ENCODE measurements at regions of chr22 and their contacts with region 1.

Region 1: DNA sequence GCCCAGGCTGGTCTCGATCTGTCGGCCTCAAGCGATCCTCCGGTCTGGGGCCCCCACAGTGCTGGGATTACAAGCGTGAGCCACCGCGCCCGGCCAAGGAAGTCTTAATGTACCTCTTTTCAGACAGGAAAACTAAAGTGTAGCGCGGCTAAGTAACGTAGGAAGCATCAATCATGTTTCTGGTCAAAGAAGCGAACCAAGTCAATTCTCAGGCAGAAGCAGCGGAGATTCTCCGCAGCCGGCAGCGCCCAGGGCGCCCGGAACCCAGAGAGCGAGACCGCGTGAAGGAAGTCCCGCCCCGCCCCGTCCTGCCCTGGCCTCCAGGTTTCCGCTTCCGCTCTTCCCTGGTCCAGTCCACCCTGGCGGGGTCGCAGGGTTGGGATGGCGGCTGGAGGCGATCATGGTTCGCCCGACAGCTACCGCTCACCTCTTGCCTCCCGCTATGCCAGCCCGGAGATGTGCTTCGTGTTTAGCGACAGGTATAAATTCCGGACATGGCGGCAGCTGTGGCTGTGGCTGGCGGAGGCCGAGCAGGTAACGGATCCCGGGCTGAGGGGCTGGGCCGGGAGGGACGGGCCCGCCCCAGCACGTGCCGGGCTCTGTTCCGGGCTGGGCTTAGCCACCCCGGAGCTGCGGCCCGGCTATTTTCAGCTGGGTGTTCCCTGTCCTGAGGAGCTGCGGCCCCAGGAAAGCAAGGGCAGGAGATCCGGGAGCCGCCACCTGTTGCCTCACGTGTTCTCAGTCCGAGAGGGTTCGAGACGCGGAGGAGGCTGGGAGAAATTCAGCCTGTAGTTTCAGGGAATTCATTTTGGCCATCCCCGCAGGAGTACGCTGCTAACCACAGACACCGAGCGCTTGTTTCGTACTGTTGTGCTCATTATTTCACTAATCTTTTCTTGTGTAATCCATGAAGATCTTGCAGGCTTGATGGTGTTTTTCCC is at the start of gene ADSL:
- DNase-seq: peak; percentile 41
- ATAC-seq: peak; percentile 95
- H3K4me3 ChIP-seq: peak within 1 kb of the TSS; percentile 81
- H3K27ac ChIP-seq: peak within 1 kb of the TSS; percentile 92
- H3K4me1 ChIP-seq: 0 out of 2 replicates have a peak, but pooled peaks cover 3% of the 10 kb centered on the region
- H3K27me3 ChIP-seq: no peaks in the 10 kb centered on the region
- CTCF ChIP-seq: no peak
- EP300 ChIP-seq: no peak
- POLR2A ChIP-seq: peak; percentile 99
- RAD21 ChIP-seq: no peak
- polyA plus RNA-seq, gene ADSL: 230 to 313 TPM

Region 2: DNA sequence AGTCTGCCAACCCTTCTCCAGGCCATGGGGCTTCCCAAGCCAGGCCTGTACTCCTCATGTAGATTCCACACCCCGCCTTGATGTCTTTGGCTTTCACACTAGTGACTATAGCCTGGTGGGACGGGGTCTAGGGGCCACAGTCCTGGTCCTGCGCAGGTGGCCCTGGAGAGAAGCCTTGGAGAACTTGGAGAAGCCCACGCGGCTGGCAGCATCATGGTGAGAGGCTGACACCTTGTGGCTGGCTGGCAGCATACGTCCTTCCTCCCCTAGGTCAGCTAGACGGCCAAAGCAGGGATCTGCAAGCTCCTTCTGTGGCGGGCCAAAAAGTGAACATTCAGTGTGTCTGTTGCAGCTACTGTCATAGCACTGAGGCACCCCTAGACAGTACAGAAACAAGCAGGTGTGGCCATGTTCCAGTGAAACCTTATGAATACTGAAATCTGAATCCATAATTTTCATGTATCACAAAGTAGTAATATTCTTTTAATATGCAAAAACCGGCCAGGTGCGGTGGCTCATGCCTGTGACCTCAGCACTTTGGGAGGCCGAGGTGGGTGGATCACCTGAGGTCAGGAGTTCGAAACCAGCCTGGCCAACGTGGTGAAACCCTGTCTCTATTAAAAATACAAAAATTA is 309.7 kb before region 1 on chr22:
- CTCF ChIA-PET with region 1: interaction called, 68 read pairs
- POLR2A ChIA-PET with region 1: interaction called, 4 read pairs
- RAD21 ChIA-PET with region 1: interaction called, 16 read pairs
- SMC1A ChIA-PET with region 1: interaction called, 67 read pairs
- in situ Hi-C with region 1: no loop called
- intact Hi-C with region 1: no loop called
- DNase-seq: no peak
- ATAC-seq: peak; percentile 97
- H3K4me3 ChIP-seq: no peak overlapping the region
- H3K27ac ChIP-seq: no peak overlapping the region
- H3K4me1 ChIP-seq: no peaks in the 10 kb centered on the region
- H3K27me3 ChIP-seq: peaks cover 6 to 8% of the 10 kb centered on the region in 2 experiments
- CTCF ChIP-seq: peak; percentile 77 to 91 (median 88)
- EP300 ChIP-seq: no peak
- POLR2A ChIP-seq: no peak
- RAD21 ChIP-seq: peak; percentile 86

Region 3: GRCh38 chr22:40177738-40178416 is 168.6 kb before region 1 on chr22 and contains the start of gene TNRC6B:
- CTCF ChIA-PET with region 1: interaction called, 26 read pairs
- POLR2A ChIA-PET with region 1: interaction called, 3 read pairs
- RAD21 ChIA-PET with region 1: interaction called, 9 read pairs
- SMC1A ChIA-PET with region 1: interaction called, 6 read pairs
- in situ Hi-C with region 1: no loop called
- intact Hi-C with region 1: loop called (anchors 10 kb)
- DNase-seq: peak; percentile 98
- ATAC-seq: peak; percentile 92
- H3K4me3 ChIP-seq: peak within 1 kb of the TSS; percentile 60
- H3K27ac ChIP-seq: peak within 1 kb of the TSS; percentile 81
- H3K4me1 ChIP-seq: peaks cover 9% of the 10 kb centered on the region
- H3K27me3 ChIP-seq: no peaks in the 10 kb centered on the region
- CTCF ChIP-seq: no peak
- EP300 ChIP-seq: peak; percentile 17 to 80; a peak in 2 of 4 replicates
- POLR2A ChIP-seq: peak; percentile 91
- RAD21 ChIP-seq: peak; percentile 24; the same call in 1 of the 2 replicates
- polyA plus RNA-seq, gene TNRC6B: 3.6 to 25.3 TPM

Region 4: DNA sequence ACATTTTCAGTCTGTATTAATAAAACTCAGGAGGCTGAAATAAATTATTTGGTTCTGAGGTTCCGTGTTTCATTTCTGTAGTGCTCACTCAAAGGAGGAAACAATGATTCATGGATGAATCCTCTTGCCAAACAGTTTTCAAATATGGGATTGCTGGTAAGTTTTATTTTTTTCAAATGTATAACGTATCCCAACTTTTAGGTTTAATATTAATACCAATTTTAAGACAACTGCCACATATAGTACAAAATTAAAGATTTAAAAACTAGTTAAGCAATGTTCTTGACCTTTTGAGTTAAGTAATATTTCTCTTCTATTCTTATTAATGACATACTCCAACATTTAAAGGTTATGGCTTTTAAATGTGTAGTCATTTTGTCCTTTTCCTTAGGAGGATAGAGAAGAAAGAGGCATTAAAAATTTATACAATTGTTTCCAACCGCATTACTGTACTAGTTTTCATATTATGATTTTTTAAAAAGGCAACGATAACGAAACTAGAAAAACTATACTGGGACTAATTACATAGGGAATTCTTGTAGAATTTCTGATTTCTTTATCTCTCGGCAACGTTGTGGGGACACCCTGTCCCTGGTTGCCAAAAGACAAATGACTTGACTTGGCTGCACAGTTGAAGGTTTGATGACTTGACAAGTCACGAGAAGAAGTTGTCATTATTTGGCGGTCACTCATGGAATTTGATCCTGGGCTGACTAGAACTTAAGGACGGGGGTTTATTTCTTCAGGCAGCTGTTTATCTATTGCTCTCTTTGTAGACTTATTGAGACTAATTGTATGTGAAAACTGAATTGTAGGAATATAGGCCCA is 69.2 kb before region 1 on chr22:
- CTCF ChIA-PET with region 1: interaction called, 5 read pairs
- POLR2A ChIA-PET with region 1: interaction called, 3 read pairs
- RAD21 ChIA-PET with region 1: interaction called, 16 read pairs
- SMC1A ChIA-PET with region 1: interaction called, 19 read pairs
- in situ Hi-C with region 1: no loop called
- intact Hi-C with region 1: no loop called
- DNase-seq: no peak
- ATAC-seq: no peak
- H3K4me3 ChIP-seq: no peak overlapping the region; the same call in 1 of the 2 replicates
- H3K27ac ChIP-seq: peak overlapping the region; percentile 64
- H3K4me1 ChIP-seq: peaks cover 8% of the 10 kb centered on the region
- H3K27me3 ChIP-seq: no peaks in the 10 kb centered on the region
- CTCF ChIP-seq: no peak
- EP300 ChIP-seq: no peak
- POLR2A ChIP-seq: no peak
- RAD21 ChIP-seq: no peak

Region 5: DNA sequence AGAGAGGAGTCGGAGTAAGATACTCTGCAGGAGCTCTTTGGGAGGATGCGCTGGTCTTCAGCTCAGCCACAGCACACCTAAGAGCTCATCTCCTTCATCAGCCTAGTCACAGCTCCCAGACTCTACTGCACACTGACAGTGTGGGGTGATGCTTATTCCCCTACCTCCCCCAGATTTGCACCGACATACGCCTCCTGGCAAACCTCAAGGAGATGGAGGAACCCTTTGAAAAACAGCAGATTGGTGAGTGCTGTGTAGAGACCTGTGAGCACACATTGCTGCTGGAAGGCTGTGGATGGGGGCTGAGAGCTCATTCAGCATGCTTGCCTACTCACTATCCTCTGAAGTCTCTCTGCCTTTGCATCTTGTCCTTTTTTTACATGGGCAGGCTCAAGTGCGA is 14.7 kb after region 1 on chr22:
- CTCF ChIA-PET with region 1: interaction called, 12 read pairs
- POLR2A ChIA-PET with region 1: no interaction called
- RAD21 ChIA-PET with region 1: interaction called, 3 read pairs
- SMC1A ChIA-PET with region 1: interaction called, 7 read pairs
- in situ Hi-C with region 1: no loop called
- intact Hi-C with region 1: no loop called
- DNase-seq: no peak
- ATAC-seq: no peak
- H3K4me3 ChIP-seq: no peak overlapping the region
- H3K27ac ChIP-seq: no peak overlapping the region
- H3K4me1 ChIP-seq: no peaks in the 10 kb centered on the region
- H3K27me3 ChIP-seq: no peaks in the 10 kb centered on the region
- CTCF ChIP-seq: no peak
- EP300 ChIP-seq: no peak
- POLR2A ChIP-seq: no peak
- RAD21 ChIP-seq: no peak

Region 6: DNA sequence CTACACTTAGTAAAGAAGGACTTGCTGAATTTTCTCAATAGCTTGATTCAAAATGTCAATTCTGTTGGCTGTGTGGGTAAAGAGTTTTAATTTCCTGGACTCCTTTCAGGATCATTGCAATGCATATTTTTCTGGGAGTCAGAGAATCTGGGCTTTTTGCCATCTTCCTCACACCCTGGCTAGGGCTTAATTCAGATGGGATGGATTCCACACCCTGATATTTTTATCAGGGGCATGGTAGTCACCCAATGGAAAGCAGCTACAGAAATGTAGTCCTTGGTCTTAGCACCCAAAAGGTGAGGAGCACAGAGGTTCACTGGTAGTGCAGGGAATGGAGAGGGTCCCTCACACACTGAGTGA is 103.2 kb after region 1 on chr22:
- CTCF ChIA-PET with region 1: no interaction called
- POLR2A ChIA-PET with region 1: no interaction called
- RAD21 ChIA-PET with region 1: no interaction called
- SMC1A ChIA-PET with region 1: no interaction called
- in situ Hi-C with region 1: no loop called
- intact Hi-C with region 1: no loop called
- DNase-seq: no peak
- ATAC-seq: no peak
- H3K4me3 ChIP-seq: no peak overlapping the region
- H3K27ac ChIP-seq: no peak overlapping the region
- H3K4me1 ChIP-seq: peaks cover 3% of the 10 kb centered on the region; the same call in 1 of the 2 replicates
- H3K27me3 ChIP-seq: no peaks in the 10 kb centered on the region
- CTCF ChIP-seq: no peak
- EP300 ChIP-seq: no peak
- POLR2A ChIP-seq: no peak
- RAD21 ChIP-seq: no peak

Region 7: GRCh38 chr22:40898850-40899357 is 552.5 kb after region 1 on chr22:
- CTCF ChIA-PET with region 1: interaction called, 15 read pairs
- POLR2A ChIA-PET with region 1: no interaction called
- RAD21 ChIA-PET with region 1: interaction called, 5 read pairs
- SMC1A ChIA-PET with region 1: interaction called, 6 read pairs
- in situ Hi-C with region 1: no loop called
- intact Hi-C with region 1: no loop called
- DNase-seq: peak; percentile 44
- ATAC-seq: peak; percentile 92
- H3K4me3 ChIP-seq: no peak overlapping the region
- H3K27ac ChIP-seq: no peak overlapping the region
- H3K4me1 ChIP-seq: no peaks in the 10 kb centered on the region
- H3K27me3 ChIP-seq: no peaks in the 10 kb centered on the region
- CTCF ChIP-seq: peak; percentile 48 to 68 (median 54); a peak in 5 of 6 replicates
- EP300 ChIP-seq: no peak
- POLR2A ChIP-seq: no peak
- RAD21 ChIP-seq: peak; percentile 77

Region 8: GRCh38 chr22:41157083-41157482 is 810.6 kb after region 1 on chr22:
- CTCF ChIA-PET with region 1: no interaction called
- POLR2A ChIA-PET with region 1: no interaction called
- RAD21 ChIA-PET with region 1: no interaction called
- SMC1A ChIA-PET with region 1: no interaction called
- in situ Hi-C with region 1: no loop called
- intact Hi-C with region 1: no loop called
- DNase-seq: no peak
- ATAC-seq: no peak
- H3K4me3 ChIP-seq: no peak overlapping the region
- H3K27ac ChIP-seq: no peak overlapping the region
- H3K4me1 ChIP-seq: no peaks in the 10 kb centered on the region
- H3K27me3 ChIP-seq: no peaks in the 10 kb centered on the region
- CTCF ChIP-seq: no peak
- EP300 ChIP-seq: no peak
- POLR2A ChIP-seq: no peak
- RAD21 ChIP-seq: no peak